ENCODE measurements at regions of chr5 and their contacts with region 1.

Region 1: GRCh38 chr5:21236971-21237427 is 1249.0 kb upstream of the CDH18 start:
- DNase-seq: peak; percentile 49
- ATAC-seq: peak; percentile 81
- H3K4me3 ChIP-seq: no peak overlapping the region
- H3K27ac ChIP-seq: peak overlapping the region; percentile 34
- H3K4me1 ChIP-seq: peaks cover 25% of the 10 kb centered on the region
- H3K27me3 ChIP-seq: no peaks in the 10 kb centered on the region
- CTCF ChIP-seq: no peak

Region 2: DNA sequence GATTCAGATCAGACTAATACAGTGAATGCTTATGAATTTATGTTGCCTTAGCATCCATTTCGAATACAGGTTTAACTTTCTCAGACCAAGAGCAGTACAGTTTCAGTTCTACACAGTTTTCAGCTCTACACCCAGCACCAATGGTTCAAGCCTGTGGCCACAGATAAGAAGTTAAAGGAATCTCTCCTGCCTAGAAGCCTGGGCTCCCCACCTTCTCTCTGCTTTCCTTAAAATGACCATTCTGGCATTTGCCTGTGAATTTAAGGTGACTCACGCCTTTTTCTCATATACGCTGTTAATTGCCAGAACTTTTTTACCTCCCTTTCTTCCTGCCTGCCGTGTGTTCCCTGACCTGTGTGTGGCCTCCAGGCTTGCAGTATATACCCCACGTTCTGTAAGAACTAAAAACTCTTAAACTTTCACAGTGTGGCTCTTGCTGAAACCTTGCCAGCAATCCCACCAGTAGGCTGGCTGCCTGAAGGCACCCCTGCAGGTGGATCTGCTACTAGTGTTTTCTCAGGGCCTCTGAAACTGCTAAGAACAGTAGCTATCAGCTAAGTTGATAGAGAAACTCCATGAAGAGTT is 556.2 kb before region 1 on chr5:
- CTCF ChIA-PET with region 1: no interaction called
- POLR2A ChIA-PET with region 1: no interaction called
- intact Hi-C with region 1: loop called (anchors 2 kb)
- DNase-seq: no peak
- ATAC-seq: no peak
- H3K4me3 ChIP-seq: no peak overlapping the region
- H3K27ac ChIP-seq: no peak overlapping the region
- H3K4me1 ChIP-seq: peaks cover 26% of the 10 kb centered on the region
- H3K27me3 ChIP-seq: no peaks in the 10 kb centered on the region
- CTCF ChIP-seq: no peak

Region 3: DNA sequence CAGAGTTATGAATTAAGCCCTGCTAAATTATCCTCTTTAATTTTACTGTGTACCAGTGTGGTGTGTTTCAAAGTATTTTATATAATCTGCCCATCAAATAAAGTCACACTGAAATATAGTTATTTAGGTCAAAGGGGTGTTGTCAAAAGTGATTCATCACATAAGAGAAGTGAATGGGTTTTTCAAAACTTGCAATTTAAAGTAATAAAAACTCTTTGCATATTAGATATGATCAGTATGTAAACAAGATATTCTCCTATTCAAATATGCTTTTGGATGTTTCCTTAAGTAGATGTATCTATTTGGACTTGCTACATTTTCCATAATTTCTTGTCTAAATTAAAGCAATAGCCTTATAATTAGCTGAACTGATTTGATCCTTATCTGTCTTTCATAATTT is 65.9 kb before region 1 on chr5:
- CTCF ChIA-PET with region 1: no interaction called
- POLR2A ChIA-PET with region 1: no interaction called
- intact Hi-C with region 1: loop called (anchors 2 kb)
- DNase-seq: peak; percentile 70
- ATAC-seq: peak; percentile 77
- H3K4me3 ChIP-seq: no peak overlapping the region
- H3K27ac ChIP-seq: peak overlapping the region; percentile 30
- H3K4me1 ChIP-seq: peaks cover 28% of the 10 kb centered on the region
- H3K27me3 ChIP-seq: no peaks in the 10 kb centered on the region
- CTCF ChIP-seq: no peak

Region 4: DNA sequence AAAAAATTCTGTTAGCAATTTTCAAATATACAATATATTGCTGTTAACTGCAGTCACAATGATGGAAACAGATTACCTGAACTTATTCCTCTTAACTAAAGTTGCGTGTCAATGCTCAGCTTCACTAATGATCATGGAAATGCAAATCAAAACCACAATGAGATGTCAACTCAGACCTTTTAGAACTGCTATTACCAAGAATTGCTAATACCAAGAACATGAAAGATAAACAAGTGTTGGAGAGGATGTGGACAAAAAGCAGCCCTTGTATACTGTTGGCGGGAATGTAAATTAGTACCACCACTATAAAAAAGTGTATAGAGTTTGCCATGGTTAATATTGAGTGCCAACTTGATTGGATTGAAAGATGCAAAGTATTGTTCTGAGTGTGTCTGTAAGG is 160.7 kb after region 1 on chr5:
- CTCF ChIA-PET with region 1: no interaction called
- POLR2A ChIA-PET with region 1: no interaction called
- intact Hi-C with region 1: no loop called
- DNase-seq: no peak
- ATAC-seq: no peak
- H3K4me3 ChIP-seq: no peak overlapping the region
- H3K27ac ChIP-seq: no peak overlapping the region
- H3K4me1 ChIP-seq: no peaks in the 10 kb centered on the region
- H3K27me3 ChIP-seq: no peaks in the 10 kb centered on the region
- CTCF ChIP-seq: no peak